Natural killer cell (primary cell): ENCODE measurements at regions of chr5 and their contacts with region 1.

Region 1: GRCh38 chr5:134873987-134874830 is at the start of gene TXNDC15:
- DNase-seq: peak; percentile 84 to 91
- ATAC-seq: peak; percentile 90 to 98 (median 93)
- H3K4me3 ChIP-seq: peak within 1 kb of the TSS; percentile 66
- H3K4me3 Mint-ChIP-seq: peak within 1 kb of the TSS; percentile 93
- H3K27ac ChIP-seq: peak within 1 kb of the TSS; percentile 99
- H3K27ac Mint-ChIP-seq: peak within 1 kb of the TSS; percentile 91 to 98
- H3K4me1 ChIP-seq: peaks cover 33% of the 10 kb centered on the region
- H3K4me1 Mint-ChIP-seq: peaks cover 23 to 38% of the 10 kb centered on the region in 2 donors
- H3K27me3 ChIP-seq: no peaks in the 10 kb centered on the region
- H3K27me3 Mint-ChIP-seq: no peaks in the 10 kb centered on the region
- CTCF ChIP-seq: no peak
- total RNA-seq, gene TXNDC15: 36.6 to 48.3 (median 47.8) TPM

Region 2: GRCh38 chr5:134345996-134346395 is 528.2 kb before region 1 on chr5:
- intact Hi-C with region 1: no loop called
- DNase-seq: no peak
- ATAC-seq: no peak
- H3K4me3 ChIP-seq: no peak overlapping the region
- H3K4me3 Mint-ChIP-seq: no peak overlapping the region
- H3K27ac ChIP-seq: no peak overlapping the region
- H3K27ac Mint-ChIP-seq: no peak overlapping the region
- H3K4me1 ChIP-seq: no peaks in the 10 kb centered on the region
- H3K4me1 Mint-ChIP-seq: no peaks in the 10 kb centered on the region
- H3K27me3 ChIP-seq: no peaks in the 10 kb centered on the region
- H3K27me3 Mint-ChIP-seq: no peaks in the 10 kb centered on the region
- CTCF ChIP-seq: no peak

Region 3: GRCh38 chr5:134738133-134738962 is 135.9 kb before region 1 on chr5 and contains the start of gene CAMLG:
- intact Hi-C with region 1: loop called (anchors 1 kb)
- DNase-seq: peak; percentile 97 to 99
- ATAC-seq: peak; percentile 96 to 100 (median 97)
- H3K4me3 ChIP-seq: peak within 1 kb of the TSS; percentile 93
- H3K4me3 Mint-ChIP-seq: peak within 1 kb of the TSS; percentile 98
- H3K27ac ChIP-seq: peak within 1 kb of the TSS; percentile 89
- H3K27ac Mint-ChIP-seq: peak within 1 kb of the TSS; percentile 96 to 97
- H3K4me1 ChIP-seq: peaks cover 18% of the 10 kb centered on the region
- H3K4me1 Mint-ChIP-seq: peaks cover 16 to 27% of the 10 kb centered on the region in 2 donors
- H3K27me3 ChIP-seq: no peaks in the 10 kb centered on the region
- H3K27me3 Mint-ChIP-seq: no peaks in the 10 kb centered on the region
- CTCF ChIP-seq: peak; percentile 75
- total RNA-seq, gene CAMLG: 23.5 to 35.9 (median 34.6) TPM

Region 4: DNA sequence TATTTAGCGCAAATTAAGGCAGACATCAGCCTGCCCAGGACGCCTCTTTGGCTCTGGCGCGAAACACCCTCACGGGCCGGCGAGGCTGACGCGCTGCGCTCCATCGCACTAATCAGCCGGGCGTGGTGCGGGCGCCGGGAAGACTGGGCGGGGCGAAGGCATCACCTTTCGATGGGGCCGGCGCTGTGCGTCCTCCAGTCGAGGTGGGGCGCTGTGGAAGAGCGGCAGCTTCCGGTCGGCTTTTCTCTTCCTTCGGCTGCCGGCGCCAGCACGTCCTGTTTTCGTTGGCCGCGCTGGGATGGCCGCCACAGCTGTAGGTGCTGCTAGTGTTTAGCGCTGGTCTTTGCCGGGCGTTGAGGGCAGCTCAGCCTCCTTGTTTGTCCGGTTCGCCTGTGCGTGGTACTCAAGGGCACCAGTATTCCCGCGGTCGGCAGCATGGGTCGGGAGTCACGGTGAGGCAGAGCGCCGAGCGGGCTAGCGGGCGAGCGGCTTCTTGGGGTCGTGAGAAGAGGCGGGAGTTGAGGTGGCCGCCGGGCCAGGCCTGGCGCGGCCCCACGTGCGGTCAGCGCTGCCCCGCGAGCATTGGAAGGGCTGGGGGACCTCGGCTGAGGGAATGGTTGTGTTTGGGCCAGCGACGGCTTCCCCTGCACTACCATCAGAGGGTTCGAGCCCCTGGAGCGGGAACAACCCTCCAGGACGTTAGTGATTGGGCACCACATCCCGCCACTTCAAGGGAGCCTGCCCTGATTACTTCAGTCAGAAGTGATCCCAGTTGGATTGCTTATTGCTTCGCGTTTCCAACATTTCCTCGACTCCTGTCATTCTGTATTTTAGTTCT is 115.5 kb before region 1 on chr5 and contains the start of gene DDX46:
- intact Hi-C with region 1: loop called (anchors 1 kb)
- DNase-seq: peak; percentile 90 to 96
- ATAC-seq: peak; percentile 97 to 99 (median 99)
- H3K4me3 ChIP-seq: peak within 1 kb of the TSS; percentile 77
- H3K4me3 Mint-ChIP-seq: peak within 1 kb of the TSS; percentile 100
- H3K27ac ChIP-seq: peak within 1 kb of the TSS; percentile 54
- H3K27ac Mint-ChIP-seq: peak within 1 kb of the TSS; percentile 96 to 98
- H3K4me1 ChIP-seq: peaks cover 13% of the 10 kb centered on the region
- H3K4me1 Mint-ChIP-seq: peaks cover 34 to 44% of the 10 kb centered on the region in 2 donors
- H3K27me3 ChIP-seq: no peaks in the 10 kb centered on the region
- H3K27me3 Mint-ChIP-seq: no peaks in the 10 kb centered on the region
- CTCF ChIP-seq: peak; percentile 74
- total RNA-seq, gene DDX46: 61.4 to 74.8 (median 67.2) TPM

Region 5: DNA sequence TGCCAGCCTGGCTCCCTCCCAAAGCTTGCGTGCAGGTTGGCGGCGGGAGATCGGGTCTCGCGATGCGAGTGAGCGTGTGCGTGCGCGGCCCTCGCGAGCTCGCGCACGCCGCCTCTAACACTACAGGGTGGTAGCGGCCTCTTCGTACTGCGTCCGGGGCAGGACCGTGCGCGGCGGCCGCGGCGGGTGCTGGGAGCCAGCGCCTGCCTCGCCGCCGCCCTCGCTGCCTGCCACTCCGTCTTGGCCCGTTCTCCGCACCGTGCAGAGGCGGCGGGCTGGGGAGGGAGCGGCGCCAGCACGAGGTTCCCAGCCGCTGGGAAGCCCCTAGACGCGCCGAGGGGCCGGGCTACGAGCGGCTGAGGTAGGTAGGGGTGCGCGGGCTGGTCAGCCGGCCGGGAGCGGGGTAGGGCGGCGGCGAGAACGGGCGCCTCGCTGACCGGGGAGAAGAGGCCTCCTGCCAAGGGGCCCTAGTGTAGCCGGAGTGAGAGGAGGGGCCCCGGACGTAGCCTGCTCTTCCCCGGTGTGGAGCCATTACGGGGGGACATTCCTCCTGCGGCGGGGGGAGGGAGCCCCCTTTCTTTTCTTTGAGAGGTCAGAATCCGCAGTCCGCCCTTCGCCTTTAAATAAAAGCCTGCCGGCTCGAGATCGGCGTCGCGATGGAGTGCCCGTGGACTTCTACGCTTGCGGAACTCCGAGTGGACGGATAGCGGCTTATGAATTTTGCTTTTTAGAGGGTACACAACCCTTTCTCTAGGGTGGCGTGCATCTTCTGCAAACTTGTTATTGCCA is 28.2 kb before region 1 on chr5 and contains the start of gene C5orf24:
- intact Hi-C with region 1: loop called (anchors 1 kb)
- DNase-seq: peak; percentile 86 to 98
- ATAC-seq: peak; percentile 91 to 98 (median 91)
- H3K4me3 ChIP-seq: peak within 1 kb of the TSS; percentile 87
- H3K4me3 Mint-ChIP-seq: peak within 1 kb of the TSS; percentile 96
- H3K27ac ChIP-seq: peak within 1 kb of the TSS; percentile 97
- H3K27ac Mint-ChIP-seq: peak within 1 kb of the TSS; percentile 94 to 99
- H3K4me1 ChIP-seq: peaks cover 24% of the 10 kb centered on the region
- H3K4me1 Mint-ChIP-seq: peaks cover 21 to 27% of the 10 kb centered on the region in 2 donors
- H3K27me3 ChIP-seq: no peaks in the 10 kb centered on the region
- H3K27me3 Mint-ChIP-seq: no peaks in the 10 kb centered on the region
- CTCF ChIP-seq: no peak
- total RNA-seq, gene C5orf24: 42.7 to 49.8 (median 44.7) TPM

Region 6: GRCh38 chr5:134917070-134917815 is 43.0 kb after region 1 on chr5:
- intact Hi-C with region 1: no loop called
- DNase-seq: peak in 1 of 2 donors; percentile 19
- ATAC-seq: no peak
- H3K4me3 ChIP-seq: no peak overlapping the region
- H3K4me3 Mint-ChIP-seq: no peak overlapping the region
- H3K27ac ChIP-seq: no peak overlapping the region
- H3K27ac Mint-ChIP-seq: peak overlapping the region in 1 of 2 donors; percentile 45
- H3K4me1 ChIP-seq: no peaks in the 10 kb centered on the region
- H3K4me1 Mint-ChIP-seq: peaks cover 5 to 11% of the 10 kb centered on the region in 2 donors
- H3K27me3 ChIP-seq: no peaks in the 10 kb centered on the region
- H3K27me3 Mint-ChIP-seq: no peaks in the 10 kb centered on the region
- CTCF ChIP-seq: no peak